ENCODE measurements at regions of chr5 and their contacts with region 1.

Region 1: DNA sequence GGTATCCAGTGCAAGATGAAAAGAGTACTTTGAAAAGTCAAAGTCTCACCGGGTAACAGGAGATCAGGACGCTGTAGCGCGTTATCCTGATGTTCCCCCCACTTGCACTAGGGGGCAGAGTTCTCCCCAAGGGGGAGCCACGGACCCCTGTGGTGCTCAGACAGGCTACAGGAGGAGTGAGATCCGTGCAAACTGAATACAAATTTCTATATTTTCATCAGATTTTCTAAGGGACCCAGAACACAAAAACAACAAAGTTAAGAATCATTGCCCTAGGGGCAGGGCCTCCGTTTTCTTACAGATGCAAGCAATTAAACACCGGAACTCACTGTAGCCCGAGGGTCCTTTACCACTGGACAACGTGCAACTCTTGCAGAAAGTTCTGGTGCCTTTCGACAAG is 2.0 kb downstream of the MYO10 start:
- DNase-seq: peak; percentile 96
- ATAC-seq: peak; percentile 51
- H3K4me3 ChIP-seq: peak overlapping the region; percentile 76
- H3K27ac ChIP-seq: peak overlapping the region; percentile 62; the same call in 1 of the 2 replicates
- H3K4me1 ChIP-seq: peaks cover 35% of the 10 kb centered on the region
- H3K27me3 ChIP-seq: no peaks in the 10 kb centered on the region
- CTCF ChIP-seq: peak; percentile 99

Region 2: GRCh38 chr5:16809395-16810207 is 124.5 kb before region 1 on chr5:
- CTCF ChIA-PET with region 1: no interaction called
- POLR2A ChIA-PET with region 1: no interaction called
- intact Hi-C with region 1: loop called (anchors 2 kb)
- DNase-seq: no peak
- ATAC-seq: peak; percentile 48
- H3K4me3 ChIP-seq: no peak overlapping the region
- H3K27ac ChIP-seq: no peak overlapping the region
- H3K4me1 ChIP-seq: peaks cover 7% of the 10 kb centered on the region
- H3K27me3 ChIP-seq: no peaks in the 10 kb centered on the region
- CTCF ChIP-seq: no peak

Region 3: DNA sequence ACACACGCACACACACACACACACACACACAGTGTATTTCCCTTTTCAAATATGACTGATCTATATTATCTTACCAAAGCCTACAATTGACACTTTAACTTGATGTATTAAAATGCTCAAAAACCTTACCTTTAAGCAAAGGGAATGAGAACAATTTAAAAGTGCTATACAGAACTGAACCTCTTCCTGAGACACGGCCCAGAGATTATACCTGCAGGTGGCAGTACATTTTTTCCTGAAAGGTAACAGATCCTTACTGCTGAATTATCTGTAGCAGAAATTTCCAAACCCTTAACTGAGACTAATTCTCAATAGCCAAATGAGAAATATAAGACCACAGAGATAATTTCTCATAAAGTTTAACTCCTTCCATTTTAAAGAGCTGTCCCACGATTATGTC is 89.2 kb before region 1 on chr5:
- CTCF ChIA-PET with region 1: interaction called, 3 read pairs
- POLR2A ChIA-PET with region 1: no interaction called
- intact Hi-C with region 1: loop called (anchors 5 kb)
- DNase-seq: peak; percentile 69
- ATAC-seq: peak; percentile 40; the same call in 1 of the 2 replicates
- H3K4me3 ChIP-seq: no peak overlapping the region
- H3K27ac ChIP-seq: no peak overlapping the region
- H3K4me1 ChIP-seq: peaks cover 19% of the 10 kb centered on the region
- H3K27me3 ChIP-seq: no peaks in the 10 kb centered on the region
- CTCF ChIP-seq: peak; percentile 91

Region 4: DNA sequence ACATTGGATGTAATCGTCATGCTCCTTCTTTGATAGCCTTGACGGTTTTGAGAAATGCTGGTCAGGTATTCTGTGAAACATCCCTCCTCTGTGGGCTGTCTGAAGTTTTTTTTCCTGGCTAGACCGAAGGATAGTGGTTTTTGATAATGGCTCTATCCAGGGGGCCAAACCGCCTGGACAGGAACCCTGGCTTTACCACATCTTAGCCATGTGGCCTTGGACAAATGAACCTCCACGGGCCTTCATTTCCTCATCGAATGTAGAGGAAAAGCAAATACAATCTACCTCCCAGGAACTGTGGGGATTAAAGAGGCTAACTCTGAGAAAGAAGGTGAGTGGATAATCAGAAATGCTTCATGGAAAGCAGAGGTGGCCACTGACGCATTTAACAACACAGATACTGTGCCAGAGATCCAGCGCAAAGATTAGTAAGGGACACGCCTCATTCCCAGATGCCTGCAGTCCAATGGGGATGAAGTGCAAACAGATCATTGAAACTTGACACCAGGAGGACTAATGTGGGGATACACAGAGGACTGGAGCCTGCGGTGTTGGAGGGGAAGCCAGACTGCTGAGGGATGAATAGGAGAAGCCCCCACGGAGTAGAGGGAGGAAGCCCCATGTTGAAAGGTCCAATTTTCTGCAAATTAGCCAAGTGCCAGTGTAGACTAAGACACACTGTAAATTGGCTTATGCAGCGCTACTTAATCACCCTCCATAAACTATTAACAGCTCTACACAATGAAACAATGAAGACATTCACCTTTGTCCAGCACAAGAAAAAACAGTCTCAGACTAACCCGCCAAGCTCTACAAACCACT is 39.7 kb before region 1 on chr5:
- CTCF ChIA-PET with region 1: interaction called, 4 read pairs
- POLR2A ChIA-PET with region 1: no interaction called
- intact Hi-C with region 1: loop called (anchors 1 kb)
- DNase-seq: peak; percentile 100
- ATAC-seq: peak; percentile 77
- H3K4me3 ChIP-seq: peak overlapping the region; percentile 39
- H3K27ac ChIP-seq: peak overlapping the region; percentile 91
- H3K4me1 ChIP-seq: peaks cover 67% of the 10 kb centered on the region
- H3K27me3 ChIP-seq: no peaks in the 10 kb centered on the region
- CTCF ChIP-seq: no peak

Region 5: DNA sequence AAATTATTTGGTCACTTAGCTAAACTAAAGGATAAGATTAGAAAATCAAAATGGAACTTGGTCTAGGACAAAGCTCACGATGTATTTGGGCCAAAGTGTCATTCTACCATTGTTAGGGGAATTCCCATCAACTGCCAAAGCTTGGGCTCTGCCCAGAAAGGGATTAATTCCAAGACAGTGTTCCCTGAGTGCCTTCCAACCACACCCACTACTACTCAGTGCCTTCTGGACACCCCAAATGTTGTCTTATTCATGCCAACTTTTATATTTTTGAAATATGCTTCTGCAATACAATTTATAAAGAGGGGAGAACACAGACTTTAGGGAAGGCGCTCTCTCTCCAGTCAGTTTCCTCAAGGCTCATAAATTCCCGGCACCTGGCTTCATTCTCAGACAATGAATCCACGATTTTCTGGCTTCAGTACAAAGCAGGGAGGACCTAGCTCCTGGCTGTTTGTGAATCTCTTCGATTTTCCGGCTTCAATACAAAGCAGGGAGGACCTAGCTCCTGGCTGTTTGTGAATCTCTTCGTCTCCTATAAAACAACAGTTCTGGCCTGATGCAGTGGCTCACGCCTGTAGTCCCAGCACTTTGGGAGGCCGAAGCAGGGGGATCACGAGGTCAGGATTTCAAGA is 122.0 kb after region 1 on chr5:
- CTCF ChIA-PET with region 1: no interaction called
- POLR2A ChIA-PET with region 1: interaction called, 18 read pairs
- intact Hi-C with region 1: loop called (anchors 1 kb)
- DNase-seq: peak; percentile 79
- ATAC-seq: peak; percentile 53
- H3K4me3 ChIP-seq: no peak overlapping the region
- H3K27ac ChIP-seq: peak overlapping the region; percentile 68
- H3K4me1 ChIP-seq: peaks cover 37% of the 10 kb centered on the region
- H3K27me3 ChIP-seq: no peaks in the 10 kb centered on the region
- CTCF ChIP-seq: no peak

Region 6: GRCh38 chr5:17132444-17133083 is 198.4 kb after region 1 on chr5:
- CTCF ChIA-PET with region 1: interaction called, 6 read pairs
- POLR2A ChIA-PET with region 1: interaction called, 4 read pairs
- intact Hi-C with region 1: loop called (anchors 1 kb)
- DNase-seq: peak; percentile 88
- ATAC-seq: no peak
- H3K4me3 ChIP-seq: no peak overlapping the region
- H3K27ac ChIP-seq: no peak overlapping the region
- H3K4me1 ChIP-seq: peaks cover 27% of the 10 kb centered on the region
- H3K27me3 ChIP-seq: no peaks in the 10 kb centered on the region
- CTCF ChIP-seq: peak; percentile 94

Measured in PC-3 (cell line).